GM12878 (cell line): ENCODE measurements at regions of chr2 and their contacts with region 1.

Region 1: DNA sequence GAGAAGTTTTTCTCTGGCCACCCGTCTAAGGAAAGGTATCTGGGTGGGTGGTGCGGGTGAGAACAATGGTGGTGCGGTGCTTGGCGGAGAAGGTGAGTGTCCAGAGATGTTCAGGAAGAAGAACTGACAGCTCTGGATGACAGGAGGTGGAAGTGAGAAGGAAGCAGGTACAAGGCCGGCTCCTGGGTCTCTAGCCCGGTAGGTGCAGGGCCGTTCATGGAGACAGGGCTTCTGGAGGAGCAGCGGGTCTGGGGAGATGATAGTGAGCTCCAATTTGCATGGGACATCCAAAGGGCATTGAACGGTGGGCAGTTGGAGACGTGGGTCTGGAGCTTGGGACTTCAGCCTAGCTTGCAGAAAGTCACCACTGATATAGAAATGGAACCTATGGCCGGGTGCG is 979 bp upstream of the FAHD2B start:
- DNase-seq: no peak
- ATAC-seq: no peak
- H3K4me3 ChIP-seq: peak overlapping the region; percentile 16; the same call in 1 of the 2 replicates
- H3K27ac ChIP-seq: no peak overlapping the region
- H3K4me1 ChIP-seq: no peaks in the 10 kb centered on the region
- H3K27me3 ChIP-seq: no peaks in the 10 kb centered on the region
- CTCF ChIP-seq: no peak
- EP300 ChIP-seq: no peak
- POLR2A ChIP-seq: no peak
- RAD21 ChIP-seq: no peak

Region 2: DNA sequence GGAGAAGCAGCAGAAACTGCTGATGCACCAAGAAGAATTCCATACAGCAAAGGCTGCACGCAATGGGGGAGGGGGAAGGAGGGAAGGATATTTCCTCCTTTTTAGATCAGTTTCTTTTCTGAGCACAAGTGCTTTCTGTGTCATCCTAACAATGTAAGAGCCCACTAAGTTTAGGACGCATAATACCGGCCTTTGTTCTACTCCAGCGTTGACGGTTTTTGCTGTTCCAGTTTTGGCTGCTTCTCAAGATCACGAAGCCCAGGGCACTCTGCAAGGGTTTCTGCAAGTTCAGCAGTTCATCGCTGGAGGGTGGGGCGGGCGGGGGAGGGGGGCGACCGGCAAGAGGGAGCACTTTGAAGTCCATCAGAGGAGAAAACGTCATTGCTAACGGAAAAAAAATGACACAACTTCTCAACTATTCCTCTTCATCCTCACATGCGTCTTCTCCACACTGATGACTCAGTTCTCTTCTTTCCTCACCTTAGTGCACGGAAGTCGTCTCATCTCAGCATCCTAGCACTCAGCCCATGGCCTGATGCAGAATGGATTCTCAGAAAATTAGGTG is 117.9 kb before region 1 on chr2:
- CTCF ChIA-PET with region 1: no interaction called
- POLR2A ChIA-PET with region 1: no interaction called
- RAD21 ChIA-PET with region 1: no interaction called
- SMC1A ChIA-PET with region 1: no interaction called
- in situ Hi-C with region 1: no loop called
- intact Hi-C with region 1: no loop called
- DNase-seq: no peak
- ATAC-seq: no peak
- H3K4me3 ChIP-seq: no peak overlapping the region
- H3K27ac ChIP-seq: no peak overlapping the region
- H3K4me1 ChIP-seq: no peaks in the 10 kb centered on the region
- H3K27me3 ChIP-seq: no peaks in the 10 kb centered on the region
- CTCF ChIP-seq: no peak
- EP300 ChIP-seq: no peak
- POLR2A ChIP-seq: no peak
- RAD21 ChIP-seq: no peak

Region 3: GRCh38 chr2:96992266-96992665 is 103.4 kb before region 1 on chr2:
- CTCF ChIA-PET with region 1: no interaction called
- POLR2A ChIA-PET with region 1: no interaction called
- RAD21 ChIA-PET with region 1: no interaction called
- SMC1A ChIA-PET with region 1: no interaction called
- in situ Hi-C with region 1: loop called (anchors 10 kb)
- intact Hi-C with region 1: no loop called
- DNase-seq: no peak
- ATAC-seq: no peak
- H3K4me3 ChIP-seq: no peak overlapping the region
- H3K27ac ChIP-seq: no peak overlapping the region
- H3K4me1 ChIP-seq: no peaks in the 10 kb centered on the region
- H3K27me3 ChIP-seq: 0 out of 4 replicates have a peak, but pooled peaks cover 0 to 2% of the 10 kb centered on the region in 2 experiments
- CTCF ChIP-seq: no peak
- EP300 ChIP-seq: no peak
- POLR2A ChIP-seq: no peak
- RAD21 ChIP-seq: no peak

Region 4: DNA sequence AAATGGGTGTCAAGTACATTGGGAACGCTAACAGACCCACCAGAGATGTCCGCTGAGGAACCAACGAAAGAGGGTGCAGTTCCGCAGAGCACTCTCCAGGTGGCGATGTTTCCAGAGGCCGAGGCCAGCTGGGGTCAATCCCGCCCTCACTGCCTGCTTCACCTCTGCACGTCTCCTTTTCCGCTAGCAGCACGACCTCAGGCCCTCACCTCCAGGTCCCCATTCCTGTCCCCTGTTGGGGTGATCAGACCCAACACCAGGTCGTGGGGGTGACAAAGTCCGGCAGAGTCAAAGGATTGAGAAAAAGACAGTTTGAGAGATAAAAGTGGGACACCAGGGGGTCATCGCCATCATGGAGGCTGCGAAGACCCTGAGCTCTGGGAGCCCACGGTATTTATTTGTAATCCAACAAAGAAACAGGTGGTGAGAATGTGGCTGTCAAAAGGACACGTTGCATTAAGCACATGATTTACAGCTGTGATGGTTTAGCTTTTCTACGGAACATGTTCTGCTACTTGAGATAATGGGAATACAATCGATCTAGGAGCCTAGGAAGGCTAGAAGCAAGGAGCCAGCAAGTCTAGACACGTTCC is 645.0 kb after region 1 on chr2:
- CTCF ChIA-PET with region 1: no interaction called
- POLR2A ChIA-PET with region 1: no interaction called
- RAD21 ChIA-PET with region 1: no interaction called
- SMC1A ChIA-PET with region 1: no interaction called
- in situ Hi-C with region 1: no loop called
- intact Hi-C with region 1: no loop called
- DNase-seq: no peak
- ATAC-seq: peak; percentile 78
- H3K4me3 ChIP-seq: no peak overlapping the region
- H3K27ac ChIP-seq: no peak overlapping the region
- H3K4me1 ChIP-seq: peaks cover 7% of the 10 kb centered on the region
- H3K27me3 ChIP-seq: no peaks in the 10 kb centered on the region
- CTCF ChIP-seq: peak; percentile 84 to 92 (median 87)
- EP300 ChIP-seq: no peak
- POLR2A ChIP-seq: no peak
- RAD21 ChIP-seq: peak; percentile 59